ENCODE measurements at regions of chr4 and their contacts with region 1.

Region 1: GRCh38 chr4:169612871-169613859 is 782 bp upstream of the NEK1 start:
- DNase-seq: peak; percentile 79
- H3K4me3 ChIP-seq: peak overlapping the region; percentile 17 to 82 (median 72)
- H3K27ac ChIP-seq: peak overlapping the region; percentile 5 to 99 (median 96)
- H3K4me1 ChIP-seq: peaks cover 14 to 49% (median 26%) of the 10 kb centered on the region in 6 donors
- H3K27me3 ChIP-seq: no peaks in the 10 kb centered on the region
- CTCF ChIP-seq: peak; percentile 21 to 75 (median 56)
- POLR2A ChIP-seq: no peak

Region 2: DNA sequence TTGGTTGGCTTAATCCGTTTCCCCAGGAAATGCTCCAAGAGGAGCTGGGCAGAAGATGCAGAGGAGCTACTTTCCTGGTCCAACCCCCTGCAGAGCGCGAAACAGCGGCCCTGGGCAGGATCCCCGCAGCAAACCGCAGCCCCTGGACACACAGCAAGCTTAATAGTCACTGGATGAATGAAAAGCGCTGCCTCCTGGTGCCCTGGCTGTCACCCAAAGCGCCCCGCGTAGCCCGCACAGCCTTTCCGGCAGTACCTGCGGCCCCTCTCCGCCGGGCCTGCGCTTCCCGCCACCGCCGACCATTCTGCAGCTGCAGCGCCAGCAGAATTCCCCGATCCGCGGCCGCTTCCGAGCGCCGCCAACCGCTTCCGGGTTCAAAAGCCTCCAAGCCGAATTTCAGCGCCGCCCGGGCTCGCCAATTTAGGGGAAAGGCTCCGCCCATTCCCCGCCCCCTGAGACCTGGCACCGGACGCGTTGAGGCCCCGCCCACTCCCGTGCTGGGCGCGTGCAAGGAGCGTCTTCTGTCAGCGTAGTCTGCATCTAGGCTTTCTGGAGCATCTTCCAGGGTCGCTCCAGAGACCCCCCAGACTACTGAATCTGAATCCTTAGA is 144.5 kb after region 1 on chr4 and contains the start of gene HPF1:
- intact Hi-C with region 1: loop called (anchors 5 kb)
- DNase-seq: peak; percentile 97
- H3K4me3 ChIP-seq: peak within 1 kb of the TSS; percentile 73 to 98 (median 89)
- H3K27ac ChIP-seq: peak within 1 kb of the TSS; percentile 33 to 84 (median 78)
- H3K4me1 ChIP-seq: peaks cover 6 to 31% (median 19%) of the 10 kb centered on the region in 6 donors
- H3K27me3 ChIP-seq: no peaks in the 10 kb centered on the region
- CTCF ChIP-seq: peak in 1 of 11 experiments; percentile 33
- POLR2A ChIP-seq: peak in 1 of 3 donors; percentile 33
- total RNA-seq, gene HPF1: 15.7 to 47.6 (median 19.8) TPM

Region 3: DNA sequence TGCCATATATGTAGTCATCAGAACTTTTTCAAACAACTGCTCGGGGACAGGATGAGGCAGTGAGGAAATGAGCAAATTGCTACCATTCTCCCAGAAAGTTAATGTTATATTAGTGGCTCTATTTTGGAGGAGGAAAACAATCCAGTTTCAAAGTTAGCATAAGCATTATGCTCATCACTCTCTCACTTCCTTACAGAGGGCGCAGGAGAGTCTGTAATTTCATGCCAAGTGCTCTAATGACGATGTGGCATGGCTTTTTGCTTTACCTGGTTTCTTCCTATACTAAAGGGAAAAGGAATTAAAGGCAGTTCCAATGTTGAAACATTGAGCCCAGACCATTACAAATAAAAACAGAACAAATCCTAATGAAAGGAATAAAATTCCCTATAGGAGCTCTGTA is 277.7 kb after region 1 on chr4:
- intact Hi-C with region 1: no loop called
- DNase-seq: no peak
- H3K4me3 ChIP-seq: no peak overlapping the region
- H3K27ac ChIP-seq: no peak overlapping the region
- H3K4me1 ChIP-seq: no peaks in the 10 kb centered on the region
- H3K27me3 ChIP-seq: no peaks in the 10 kb centered on the region
- CTCF ChIP-seq: no peak
- POLR2A ChIP-seq: no peak

Region 4: GRCh38 chr4:169940450-169940849 is 327.3 kb after region 1 on chr4:
- intact Hi-C with region 1: no loop called
- DNase-seq: no peak
- H3K4me3 ChIP-seq: no peak overlapping the region
- H3K27ac ChIP-seq: no peak overlapping the region
- H3K4me1 ChIP-seq: no peaks in the 10 kb centered on the region
- H3K27me3 ChIP-seq: no peaks in the 10 kb centered on the region
- CTCF ChIP-seq: no peak
- POLR2A ChIP-seq: no peak